Activated CD4-positive, alpha-beta memory T cell treated with anti-CD3 and anti-CD28 coated beads, Interleukin-2, amount 10 ng/mL, durations not matched to agents 7 days and 5 days (primary cell): ENCODE measurements at regions of chr10 and their contacts with region 1.

Region 1: DNA sequence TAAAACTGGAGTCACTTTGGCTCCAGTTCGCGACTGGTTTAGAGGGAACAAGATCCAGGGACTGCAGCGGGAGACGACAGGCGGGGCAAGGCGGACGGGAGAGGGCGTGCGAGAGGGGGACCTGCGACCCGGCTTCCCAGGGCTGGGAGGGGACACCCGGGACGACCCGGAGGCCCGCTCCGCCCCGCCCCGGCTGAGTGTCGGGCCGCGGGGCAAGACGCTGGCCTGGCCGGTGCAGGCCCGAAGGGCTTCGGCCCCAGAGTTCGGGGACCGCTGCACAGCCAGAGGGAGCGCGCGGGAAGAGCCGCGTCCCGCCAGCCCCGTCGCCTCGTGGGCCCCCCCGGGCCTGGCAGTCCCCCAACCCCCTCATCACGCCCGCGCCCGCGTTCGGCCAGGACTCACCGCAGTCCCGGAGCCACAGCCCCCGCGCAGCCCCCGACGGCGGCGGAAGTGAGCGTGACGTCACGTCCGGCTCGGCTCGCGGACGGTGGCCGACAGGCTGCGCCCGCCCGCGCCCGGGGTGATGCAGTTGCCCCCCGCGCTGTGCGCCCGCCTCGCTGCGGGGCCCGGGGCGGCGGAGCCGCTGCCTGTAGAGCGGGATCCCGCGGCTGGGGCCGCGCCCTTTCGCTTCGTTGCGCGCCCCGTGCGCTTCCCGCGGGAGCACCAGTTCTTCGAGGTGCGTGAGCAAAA is at the starts of genes TUBGCP2 and ZNF511:
- DNase-seq: peak; percentile 89
- H3K4me3 Mint-ChIP-seq: peak within 1 kb of the TSS; percentile 95
- H3K27ac Mint-ChIP-seq: peak within 1 kb of the TSS; percentile 98
- H3K4me1 Mint-ChIP-seq: peaks cover 29% of the 10 kb centered on the region
- H3K27me3 Mint-ChIP-seq: no peaks in the 10 kb centered on the region
- total RNA-seq, gene TUBGCP2: 52.3 to 58.2 TPM
- total RNA-seq, gene ZNF511: 45.7 to 52.7 TPM

Region 2: DNA sequence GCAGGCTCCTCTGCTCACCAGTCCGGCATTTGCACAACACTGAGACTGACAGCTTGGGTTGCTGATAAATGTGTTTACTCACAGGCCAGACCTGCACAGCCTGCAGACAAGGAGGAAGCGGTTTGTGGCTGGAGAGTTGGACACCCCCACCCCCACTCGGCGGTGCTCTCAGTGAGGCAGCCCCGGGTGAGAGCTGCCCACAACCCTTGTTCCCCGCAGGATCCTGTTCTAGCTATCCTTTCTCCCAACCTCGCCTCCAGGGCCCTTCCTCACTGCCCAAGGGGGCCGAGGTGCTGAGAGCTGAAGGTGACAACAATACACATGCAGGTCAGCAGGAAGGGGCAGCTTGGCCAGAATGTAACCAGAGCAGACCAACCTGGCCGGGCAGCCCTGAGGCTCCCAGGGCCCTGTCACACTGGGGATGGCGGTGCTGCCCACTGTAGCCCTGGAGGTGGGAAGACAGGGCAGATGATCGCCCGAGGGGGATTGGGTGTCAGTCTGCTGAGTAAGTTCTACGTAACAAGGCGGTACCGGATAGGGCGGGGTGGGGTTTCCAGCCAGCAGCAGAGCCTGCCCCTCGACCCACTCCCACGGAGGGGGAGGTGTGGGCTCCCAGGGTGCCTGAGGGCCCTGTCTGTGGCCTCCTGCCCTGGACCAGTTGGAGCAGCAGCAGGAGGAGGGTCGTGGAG is 29.8 kb before region 1 on chr10:
- CTCF ChIA-PET with region 1: interaction called, 19 read pairs
- POLR2A ChIA-PET with region 1: interaction called, 16 read pairs
- DNase-seq: peak; percentile 89
- H3K4me3 Mint-ChIP-seq: peak overlapping the region; percentile 71
- H3K27ac Mint-ChIP-seq: peak overlapping the region; percentile 97
- H3K4me1 Mint-ChIP-seq: peaks cover 36% of the 10 kb centered on the region
- H3K27me3 Mint-ChIP-seq: no peaks in the 10 kb centered on the region

Region 3: DNA sequence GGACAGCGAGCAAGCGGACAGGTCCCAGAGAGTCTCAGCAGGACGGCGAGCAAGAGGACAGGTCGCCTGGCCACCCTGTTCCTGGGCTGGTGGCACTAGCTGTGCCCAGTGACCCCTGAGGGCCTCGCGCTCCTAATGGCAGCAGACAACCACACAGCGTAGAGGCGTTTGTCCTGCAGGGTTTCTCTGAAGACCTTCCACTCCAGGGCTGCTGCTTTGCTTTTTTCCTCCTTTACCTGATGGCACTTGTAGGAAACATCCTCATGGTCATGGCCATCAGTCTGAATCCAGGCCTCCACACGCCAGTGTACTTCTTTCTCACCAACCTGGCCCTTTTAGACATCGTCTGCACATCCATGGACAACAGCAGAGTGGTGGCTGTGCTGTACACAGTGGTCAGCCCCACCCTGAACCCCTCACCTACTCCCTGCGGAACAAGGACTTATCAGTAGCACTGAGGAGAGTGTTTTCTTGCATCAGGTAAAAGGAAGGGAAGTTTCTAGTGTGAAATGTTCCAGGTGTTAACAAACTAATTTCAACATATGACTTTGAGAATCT is 172.6 kb after region 1 on chr10:
- CTCF ChIA-PET with region 1: no interaction called
- POLR2A ChIA-PET with region 1: no interaction called
- DNase-seq: no peak
- H3K4me3 Mint-ChIP-seq: no peak overlapping the region
- H3K27ac Mint-ChIP-seq: no peak overlapping the region
- H3K4me1 Mint-ChIP-seq: peaks cover 6% of the 10 kb centered on the region
- H3K27me3 Mint-ChIP-seq: peaks cover 40% of the 10 kb centered on the region